H1 (cell line): ENCODE measurements at regions of chr5 and their contacts with region 1.

Region 1: GRCh38 chr5:28473531-28474107 is 1435.2 kb upstream of the CDH9 start:
- DNase-seq: no peak
- H3K4me3 ChIP-seq: no peak overlapping the region
- H3K27ac ChIP-seq: no peak overlapping the region
- H3K4me1 ChIP-seq: no peaks in the 10 kb centered on the region
- H3K27me3 ChIP-seq: no peaks in the 10 kb centered on the region
- CTCF ChIP-seq: peak in 2 of 3 experiments; percentile 40 to 44; a peak in 2 of 4 replicates
- EP300 ChIP-seq: no peak
- POLR2A ChIP-seq: no peak
- RAD21 ChIP-seq: peak; percentile 73 to 75

Region 2: GRCh38 chr5:27928060-27928459 is 545.6 kb before region 1 on chr5:
- CTCF ChIA-PET with region 1: no interaction called
- POLR2A ChIA-PET with region 1: no interaction called
- DNase-seq: no peak
- H3K4me3 ChIP-seq: no peak overlapping the region
- H3K27ac ChIP-seq: no peak overlapping the region
- H3K4me1 ChIP-seq: no peaks in the 10 kb centered on the region
- H3K27me3 ChIP-seq: no peaks in the 10 kb centered on the region
- CTCF ChIP-seq: no peak
- EP300 ChIP-seq: no peak
- POLR2A ChIP-seq: no peak
- RAD21 ChIP-seq: no peak

Region 3: DNA sequence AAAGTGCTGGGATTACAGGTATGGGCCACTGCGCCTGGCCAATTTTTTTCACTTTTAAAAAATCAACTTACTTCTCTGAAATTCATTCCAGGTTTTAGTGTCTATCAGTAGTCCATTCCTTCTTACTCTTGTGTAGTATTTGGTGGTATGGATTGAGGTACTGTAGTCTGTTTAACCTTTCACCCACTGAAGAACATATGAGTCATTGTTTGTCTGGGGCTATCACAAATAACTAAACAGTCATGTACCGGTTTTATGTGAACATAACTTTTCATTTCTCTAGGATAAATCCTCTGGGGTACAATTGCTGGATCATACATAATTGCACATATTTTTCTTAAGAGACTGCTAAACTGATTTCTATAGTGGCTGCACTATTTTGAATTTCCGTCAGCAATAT is 247.2 kb before region 1 on chr5:
- CTCF ChIA-PET with region 1: no interaction called
- POLR2A ChIA-PET with region 1: no interaction called
- DNase-seq: no peak
- H3K4me3 ChIP-seq: no peak overlapping the region
- H3K27ac ChIP-seq: no peak overlapping the region
- H3K4me1 ChIP-seq: no peaks in the 10 kb centered on the region
- H3K27me3 ChIP-seq: no peaks in the 10 kb centered on the region
- CTCF ChIP-seq: no peak
- EP300 ChIP-seq: no peak
- POLR2A ChIP-seq: no peak
- RAD21 ChIP-seq: no peak

Region 4: GRCh38 chr5:28415791-28416443 is 57.7 kb before region 1 on chr5:
- CTCF ChIA-PET with region 1: no interaction called
- POLR2A ChIA-PET with region 1: no interaction called
- DNase-seq: no peak
- H3K4me3 ChIP-seq: no peak overlapping the region
- H3K27ac ChIP-seq: no peak overlapping the region
- H3K4me1 ChIP-seq: no peaks in the 10 kb centered on the region
- H3K27me3 ChIP-seq: no peaks in the 10 kb centered on the region
- CTCF ChIP-seq: no peak
- EP300 ChIP-seq: no peak
- POLR2A ChIP-seq: no peak
- RAD21 ChIP-seq: no peak

Region 5: GRCh38 chr5:28505125-28505524 is 31.5 kb after region 1 on chr5:
- CTCF ChIA-PET with region 1: no interaction called
- POLR2A ChIA-PET with region 1: no interaction called
- DNase-seq: no peak
- H3K4me3 ChIP-seq: no peak overlapping the region
- H3K27ac ChIP-seq: no peak overlapping the region
- H3K4me1 ChIP-seq: no peaks in the 10 kb centered on the region
- H3K27me3 ChIP-seq: no peaks in the 10 kb centered on the region
- CTCF ChIP-seq: no peak
- EP300 ChIP-seq: no peak
- POLR2A ChIP-seq: no peak
- RAD21 ChIP-seq: no peak

Region 6: DNA sequence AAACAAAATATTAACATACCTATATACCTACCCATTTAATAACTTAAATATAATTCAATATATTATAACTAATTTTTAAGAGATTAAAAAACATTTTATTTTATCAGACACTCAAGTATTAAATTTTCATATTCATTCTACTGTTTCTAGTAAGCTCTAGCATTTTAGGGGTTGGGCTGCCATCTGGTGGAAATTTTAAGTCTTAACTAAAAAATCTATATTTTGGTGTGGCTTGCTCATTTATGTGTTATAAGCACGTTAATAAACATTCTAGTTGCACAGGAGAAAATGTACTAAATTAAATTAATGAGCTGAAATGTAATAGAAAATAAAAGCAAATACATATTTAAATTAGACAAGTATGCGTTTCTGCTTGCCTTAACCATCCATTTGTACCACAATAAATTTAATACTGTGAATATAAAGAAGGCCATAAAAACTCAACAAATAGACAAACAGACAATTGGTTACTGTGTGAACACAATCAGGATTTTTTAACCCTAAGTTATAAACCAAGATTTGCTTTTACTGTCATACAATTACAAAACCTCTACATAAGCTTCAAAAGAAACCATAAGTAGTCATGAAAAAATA is 293.0 kb after region 1 on chr5:
- CTCF ChIA-PET with region 1: interaction called, 19 read pairs
- POLR2A ChIA-PET with region 1: no interaction called
- DNase-seq: no peak
- H3K4me3 ChIP-seq: no peak overlapping the region
- H3K27ac ChIP-seq: no peak overlapping the region
- H3K4me1 ChIP-seq: no peaks in the 10 kb centered on the region
- H3K27me3 ChIP-seq: no peaks in the 10 kb centered on the region
- CTCF ChIP-seq: peak in 2 of 3 experiments; percentile 12 to 31; a peak in 2 of 4 replicates
- EP300 ChIP-seq: no peak
- POLR2A ChIP-seq: no peak
- RAD21 ChIP-seq: peak; percentile 63 to 73